T-cell (primary cell): ENCODE measurements at regions of chr16 and their contacts with region 1.

Region 1: GRCh38 chr16:50154369-50154950 is 1.4 kb downstream of the TENT4B start:
- DNase-seq: peak in 1 of 35 experiments; percentile 36
- ATAC-seq: no peak
- H3K4me3 ChIP-seq: peak overlapping the region; percentile 54 to 66
- H3K4me3 Mint-ChIP-seq: peak overlapping the region; percentile 80 to 90 (median 87)
- H3K27ac ChIP-seq: peak overlapping the region; percentile 23
- H3K27ac Mint-ChIP-seq: peak overlapping the region; percentile 60 to 63
- H3K4me1 ChIP-seq: peaks cover 24 to 40% of the 10 kb centered on the region in 2 experiments
- H3K4me1 Mint-ChIP-seq: peaks cover 50 to 57% (median 53%) of the 10 kb centered on the region in 3 donors
- H3K27me3 ChIP-seq: no peaks in the 10 kb centered on the region
- H3K27me3 Mint-ChIP-seq: no peaks in the 10 kb centered on the region

Region 2: DNA sequence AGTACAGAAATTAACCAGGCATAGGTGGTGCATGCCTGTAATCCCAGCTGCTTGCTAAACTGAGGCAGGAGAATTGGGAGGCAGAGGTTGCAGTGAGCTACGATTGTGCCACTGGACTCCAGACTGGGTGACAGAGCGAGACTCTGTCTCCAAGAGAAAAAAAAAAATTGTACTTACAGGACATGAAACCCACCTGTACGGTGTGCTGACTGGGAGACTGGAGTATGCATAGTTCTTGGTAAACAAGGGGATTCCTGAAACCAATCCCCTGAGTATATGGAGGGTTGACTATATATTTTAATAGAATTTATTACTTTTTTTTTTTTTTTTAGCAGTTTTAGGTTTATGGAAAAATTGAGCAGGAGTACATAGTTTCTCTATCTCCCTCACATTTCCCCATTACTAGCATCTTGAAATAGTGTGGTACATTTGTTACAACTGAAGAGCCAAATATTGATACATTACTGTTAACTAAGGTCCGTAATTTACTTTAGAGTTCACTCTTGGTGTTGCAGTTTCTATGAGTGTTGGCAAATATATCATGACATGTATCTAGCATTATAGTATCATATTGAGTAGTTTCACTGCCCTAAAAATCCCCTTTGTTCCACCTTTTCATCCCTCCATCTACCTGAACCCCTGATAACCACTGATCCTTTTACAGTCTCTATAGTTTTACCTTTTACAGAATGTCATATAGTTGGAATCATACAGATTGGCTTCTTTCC is 17.9 kb after region 1 on chr16:
- CTCF ChIA-PET with region 1: no interaction called
- POLR2A ChIA-PET with region 1: interaction called in 1 of 2 experiments, 16 read pairs
- DNase-seq: no peak
- ATAC-seq: no peak
- H3K4me3 ChIP-seq: no peak overlapping the region
- H3K4me3 Mint-ChIP-seq: no peak overlapping the region
- H3K27ac ChIP-seq: no peak overlapping the region
- H3K27ac Mint-ChIP-seq: no peak overlapping the region
- H3K4me1 ChIP-seq: peaks cover 7 to 15% of the 10 kb centered on the region in 2 experiments
- H3K4me1 Mint-ChIP-seq: peaks cover 65 to 71% (median 68%) of the 10 kb centered on the region in 3 donors
- H3K27me3 ChIP-seq: no peaks in the 10 kb centered on the region
- H3K27me3 Mint-ChIP-seq: no peaks in the 10 kb centered on the region

Region 3: DNA sequence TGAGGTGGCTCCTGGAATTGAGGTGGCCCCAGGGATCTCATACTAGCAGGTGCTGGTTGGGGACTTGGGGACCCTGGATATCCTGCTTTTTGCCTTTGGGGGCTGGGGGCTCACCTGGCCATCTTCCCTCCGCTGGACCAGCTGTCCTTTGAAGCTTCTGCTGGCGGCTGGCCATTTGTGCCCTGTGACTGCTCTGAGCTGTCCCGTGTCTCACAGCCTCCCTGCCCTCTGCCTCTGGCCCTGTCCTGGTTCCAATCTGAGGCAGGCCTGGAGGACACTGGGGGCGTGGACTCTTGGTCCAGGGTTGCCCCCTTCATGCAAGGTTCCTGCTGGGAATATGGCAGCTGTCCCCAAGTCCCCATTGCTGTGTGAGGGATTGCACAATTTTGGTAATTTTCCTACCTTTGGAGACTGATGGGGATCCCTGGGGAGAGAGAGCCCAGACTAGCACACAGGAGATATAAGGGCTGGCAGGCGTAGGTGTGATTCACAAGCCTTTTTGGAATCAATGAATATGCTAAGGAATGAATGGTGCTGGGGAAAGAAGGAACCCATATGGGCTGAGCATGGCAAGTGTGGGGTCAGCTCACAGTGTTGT is 131.0 kb after region 1 on chr16:
- CTCF ChIA-PET with region 1: no interaction called
- POLR2A ChIA-PET with region 1: interaction called in 1 of 2 experiments, 11 read pairs
- DNase-seq: no peak
- ATAC-seq: no peak
- H3K4me3 ChIP-seq: no peak overlapping the region
- H3K4me3 Mint-ChIP-seq: peak overlapping the region in 1 of 3 donors; percentile 85
- H3K27ac ChIP-seq: no peak overlapping the region
- H3K27ac Mint-ChIP-seq: peak overlapping the region; percentile 86 to 99
- H3K4me1 ChIP-seq: peaks cover 21 to 84% of the 10 kb centered on the region in 2 experiments
- H3K4me1 Mint-ChIP-seq: peaks cover 47 to 79% (median 71%) of the 10 kb centered on the region in 3 donors
- H3K27me3 ChIP-seq: no peaks in the 10 kb centered on the region
- H3K27me3 Mint-ChIP-seq: no peaks in the 10 kb centered on the region

Region 4: DNA sequence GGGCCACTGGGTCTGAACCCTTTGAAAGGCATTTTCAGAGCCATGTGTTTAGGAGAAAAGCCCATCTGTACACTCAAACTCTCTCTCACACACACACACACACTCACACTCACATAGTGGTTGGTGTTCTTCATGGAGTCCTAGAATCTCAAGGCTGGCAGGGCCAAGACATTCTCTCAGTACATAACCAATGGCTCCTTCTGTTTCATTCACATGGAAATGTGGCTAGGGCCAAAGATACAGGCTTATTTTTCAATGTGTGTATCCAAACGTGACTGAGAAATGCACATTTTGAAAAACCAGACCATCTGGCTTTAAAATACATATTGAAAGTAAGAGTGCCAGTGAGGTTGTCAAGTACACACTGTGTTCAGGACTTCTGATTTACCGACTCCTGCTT is 1055.6 kb after region 1 on chr16:
- CTCF ChIA-PET with region 1: no interaction called
- POLR2A ChIA-PET with region 1: no interaction called
- DNase-seq: no peak
- ATAC-seq: no peak
- H3K4me3 ChIP-seq: no peak overlapping the region
- H3K4me3 Mint-ChIP-seq: no peak overlapping the region
- H3K27ac ChIP-seq: no peak overlapping the region
- H3K27ac Mint-ChIP-seq: no peak overlapping the region
- H3K4me1 ChIP-seq: no peaks in the 10 kb centered on the region
- H3K4me1 Mint-ChIP-seq: no peaks in the 10 kb centered on the region
- H3K27me3 ChIP-seq: no peaks in the 10 kb centered on the region
- H3K27me3 Mint-ChIP-seq: no peaks in the 10 kb centered on the region